ENCODE measurements at regions of chr10 and their contacts with region 1.

Region 1: DNA sequence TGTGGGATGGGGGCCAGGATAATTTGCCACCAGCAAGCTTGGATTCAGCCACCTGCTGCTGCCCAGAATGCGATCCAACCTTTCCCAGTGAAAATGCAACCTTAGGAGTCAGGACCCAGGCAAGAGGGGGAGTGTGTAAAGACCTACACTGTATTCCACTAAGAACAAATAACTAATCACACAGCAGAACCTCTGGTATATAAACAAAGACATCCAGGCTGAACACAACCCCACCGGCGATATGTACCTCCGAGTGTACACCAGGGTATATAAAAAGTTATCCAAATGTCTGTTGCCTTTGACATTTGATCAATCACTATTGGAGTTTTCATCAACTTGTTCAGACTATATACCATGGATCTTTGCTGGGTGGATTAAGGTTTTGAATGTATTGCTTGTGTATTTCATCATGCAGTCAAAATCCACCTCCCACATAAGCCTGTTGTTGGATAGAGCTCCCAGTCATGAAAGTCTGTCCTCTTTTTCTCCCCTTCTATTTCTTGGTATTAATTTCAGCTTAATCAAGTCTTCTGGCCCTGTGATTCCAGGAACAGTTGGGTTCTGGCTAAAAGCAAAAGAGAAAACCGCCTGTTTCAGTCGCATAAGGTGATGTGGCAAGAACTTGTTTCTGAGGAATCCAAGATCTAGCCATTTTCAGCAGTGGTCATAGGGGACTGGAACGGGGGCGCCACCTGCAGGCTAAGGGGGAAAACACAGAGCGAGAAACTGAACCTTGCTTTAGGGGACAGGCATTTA is 290.7 kb downstream of the CCDC3 start:
- DNase-seq: peak; percentile 90
- ATAC-seq: peak; percentile 91
- H3K4me3 Mint-ChIP-seq: no peak overlapping the region
- H3K27ac Mint-ChIP-seq: peak overlapping the region; percentile 84
- H3K4me1 Mint-ChIP-seq: peaks cover 59% of the 10 kb centered on the region
- H3K27me3 Mint-ChIP-seq: no peaks in the 10 kb centered on the region
- CTCF ChIP-seq: peak; percentile 84

Region 2: DNA sequence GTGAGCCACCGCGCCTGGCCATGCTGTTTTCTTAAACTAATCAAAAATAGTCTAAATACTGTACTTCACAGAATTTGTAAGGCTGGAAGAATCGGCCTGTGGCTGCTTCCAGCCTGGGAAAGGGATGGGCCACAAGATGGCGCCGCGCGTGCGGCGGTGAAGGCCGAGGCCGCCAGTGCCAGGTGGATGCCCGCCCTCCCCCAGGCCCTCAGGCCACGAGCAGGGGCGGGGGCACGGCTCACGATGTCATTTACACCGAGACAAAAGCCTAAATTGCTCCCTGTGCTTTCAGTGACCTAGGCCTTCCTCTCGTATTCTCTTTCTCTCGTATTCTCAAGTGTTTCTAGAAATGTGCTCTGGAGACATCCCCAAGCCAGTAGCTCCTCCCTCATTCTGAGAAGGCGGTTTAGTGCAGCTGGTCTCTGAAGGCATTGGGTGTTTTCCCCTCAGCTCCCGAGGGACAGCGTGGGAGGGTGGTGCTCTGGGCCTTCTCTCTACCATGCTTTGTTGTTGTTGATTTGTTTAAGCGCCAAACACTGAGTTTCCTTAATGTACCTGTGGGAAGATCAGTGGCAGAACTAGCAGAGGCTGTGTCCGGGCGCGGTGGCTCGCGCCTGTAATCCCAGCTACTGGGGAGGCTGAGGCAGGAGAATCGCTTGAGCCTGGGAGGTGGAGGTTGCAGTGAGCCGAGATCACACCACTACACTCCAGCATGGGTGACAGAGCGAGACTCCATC is 446.4 kb before region 1 on chr10:
- CTCF ChIA-PET with region 1: interaction called, 9 read pairs
- POLR2A ChIA-PET with region 1: no interaction called
- intact Hi-C with region 1: loop called (anchors 5 kb)
- DNase-seq: peak; percentile 89
- ATAC-seq: peak; percentile 92
- H3K4me3 Mint-ChIP-seq: peak overlapping the region; percentile 30
- H3K27ac Mint-ChIP-seq: peak overlapping the region; percentile 85
- H3K4me1 Mint-ChIP-seq: peaks cover 24% of the 10 kb centered on the region
- H3K27me3 Mint-ChIP-seq: no peaks in the 10 kb centered on the region
- CTCF ChIP-seq: peak; percentile 73

Region 3: DNA sequence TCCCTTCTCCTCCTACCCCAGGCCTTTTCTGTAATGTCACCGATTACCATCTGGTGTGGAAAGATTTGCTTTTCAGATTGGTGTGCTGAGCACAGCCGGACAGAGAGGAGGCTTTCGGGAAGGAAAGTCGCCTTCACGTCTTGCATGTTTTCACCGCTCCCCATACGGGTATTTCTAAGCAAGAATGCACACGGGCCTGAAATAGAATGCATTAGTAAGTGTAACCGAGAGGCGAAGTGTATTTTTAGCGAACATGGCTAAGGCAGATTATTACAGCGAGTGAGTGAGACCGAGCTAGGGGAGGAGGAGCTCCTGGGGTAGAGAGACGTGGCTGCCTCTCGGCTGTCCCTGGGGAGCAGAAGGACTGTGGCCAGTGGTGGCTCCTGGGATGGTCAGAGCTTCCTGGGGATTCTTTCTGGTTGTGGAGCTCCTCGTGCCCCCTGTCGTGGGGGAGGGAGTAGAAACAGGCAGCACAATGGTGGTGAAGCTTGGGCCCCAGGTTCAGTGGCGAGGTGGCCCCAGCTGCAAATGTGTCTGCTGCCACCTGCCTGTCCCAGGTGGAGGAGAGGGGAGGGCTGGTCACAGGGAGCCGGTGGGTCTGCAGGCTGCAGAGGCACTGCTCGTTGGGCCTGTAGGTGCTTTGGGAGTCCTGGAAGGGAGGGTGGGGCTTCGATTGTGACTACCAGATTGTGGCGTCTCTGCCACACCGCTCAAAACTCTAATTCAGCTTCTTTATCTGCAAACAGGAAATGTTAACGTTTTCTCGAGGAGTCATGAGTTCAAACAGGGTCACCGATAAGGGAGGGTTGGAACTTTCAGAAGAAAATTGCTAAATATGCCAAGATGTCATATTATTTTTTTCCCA is 225.6 kb before region 1 on chr10:
- CTCF ChIA-PET with region 1: no interaction called
- POLR2A ChIA-PET with region 1: no interaction called
- intact Hi-C with region 1: no loop called
- DNase-seq: peak; percentile 54
- ATAC-seq: peak; percentile 80
- H3K4me3 Mint-ChIP-seq: no peak overlapping the region
- H3K27ac Mint-ChIP-seq: peak overlapping the region; percentile 56
- H3K4me1 Mint-ChIP-seq: peaks cover 25% of the 10 kb centered on the region
- H3K27me3 Mint-ChIP-seq: no peaks in the 10 kb centered on the region
- CTCF ChIP-seq: no peak

Region 4: GRCh38 chr10:12656518-12657142 is 54.1 kb before region 1 on chr10:
- CTCF ChIA-PET with region 1: interaction called, 15 read pairs
- POLR2A ChIA-PET with region 1: no interaction called
- intact Hi-C with region 1: no loop called
- DNase-seq: no peak
- ATAC-seq: peak; percentile 86
- H3K4me3 Mint-ChIP-seq: no peak overlapping the region
- H3K27ac Mint-ChIP-seq: no peak overlapping the region
- H3K4me1 Mint-ChIP-seq: peaks cover 23% of the 10 kb centered on the region
- H3K27me3 Mint-ChIP-seq: no peaks in the 10 kb centered on the region
- CTCF ChIP-seq: peak; percentile 86

Region 5: GRCh38 chr10:12699258-12699700 is 11.5 kb before region 1 on chr10:
- CTCF ChIA-PET with region 1: interaction called, 15 read pairs
- POLR2A ChIA-PET with region 1: interaction called, 4 read pairs
- intact Hi-C with region 1: no loop called
- DNase-seq: peak; percentile 68
- ATAC-seq: peak; percentile 72
- H3K4me3 Mint-ChIP-seq: no peak overlapping the region
- H3K27ac Mint-ChIP-seq: peak overlapping the region; percentile 92
- H3K4me1 Mint-ChIP-seq: peaks cover 37% of the 10 kb centered on the region
- H3K27me3 Mint-ChIP-seq: no peaks in the 10 kb centered on the region
- CTCF ChIP-seq: no peak

Region 6: GRCh38 chr10:12726971-12727831 is 16.4 kb after region 1 on chr10:
- CTCF ChIA-PET with region 1: interaction called, 26 read pairs
- POLR2A ChIA-PET with region 1: interaction called, 4 read pairs
- intact Hi-C with region 1: no loop called
- DNase-seq: peak; percentile 16
- ATAC-seq: peak; percentile 71
- H3K4me3 Mint-ChIP-seq: no peak overlapping the region
- H3K27ac Mint-ChIP-seq: no peak overlapping the region
- H3K4me1 Mint-ChIP-seq: peaks cover 14% of the 10 kb centered on the region
- H3K27me3 Mint-ChIP-seq: no peaks in the 10 kb centered on the region
- CTCF ChIP-seq: no peak

Region 7: DNA sequence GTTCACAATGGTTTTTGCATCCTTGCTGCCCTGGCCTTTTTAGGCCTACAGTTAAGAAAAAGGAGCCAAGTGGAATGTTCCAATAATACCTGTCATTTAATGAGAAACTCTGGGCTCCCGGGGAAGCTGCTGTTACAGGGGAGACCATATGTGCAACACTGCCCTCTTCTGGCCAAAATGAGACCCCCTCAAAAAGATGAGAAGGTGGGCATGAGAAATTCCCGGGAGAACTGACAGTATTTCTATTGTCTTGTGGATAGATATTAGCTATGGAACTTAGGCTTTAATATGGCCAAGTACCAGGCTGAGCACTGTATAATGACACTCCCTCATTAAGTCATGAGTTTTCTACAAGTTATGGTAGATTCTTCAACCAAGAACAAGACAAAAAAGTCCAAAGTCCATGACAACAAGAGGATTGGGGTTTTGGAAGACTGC is 191.4 kb after region 1 on chr10:
- CTCF ChIA-PET with region 1: interaction called, 18 read pairs
- POLR2A ChIA-PET with region 1: no interaction called
- intact Hi-C with region 1: no loop called
- DNase-seq: peak; percentile 75
- ATAC-seq: peak; percentile 37
- H3K4me3 Mint-ChIP-seq: no peak overlapping the region
- H3K27ac Mint-ChIP-seq: no peak overlapping the region
- H3K4me1 Mint-ChIP-seq: no peaks in the 10 kb centered on the region
- H3K27me3 Mint-ChIP-seq: peaks cover 8% of the 10 kb centered on the region
- CTCF ChIP-seq: peak; percentile 87

Region 8: DNA sequence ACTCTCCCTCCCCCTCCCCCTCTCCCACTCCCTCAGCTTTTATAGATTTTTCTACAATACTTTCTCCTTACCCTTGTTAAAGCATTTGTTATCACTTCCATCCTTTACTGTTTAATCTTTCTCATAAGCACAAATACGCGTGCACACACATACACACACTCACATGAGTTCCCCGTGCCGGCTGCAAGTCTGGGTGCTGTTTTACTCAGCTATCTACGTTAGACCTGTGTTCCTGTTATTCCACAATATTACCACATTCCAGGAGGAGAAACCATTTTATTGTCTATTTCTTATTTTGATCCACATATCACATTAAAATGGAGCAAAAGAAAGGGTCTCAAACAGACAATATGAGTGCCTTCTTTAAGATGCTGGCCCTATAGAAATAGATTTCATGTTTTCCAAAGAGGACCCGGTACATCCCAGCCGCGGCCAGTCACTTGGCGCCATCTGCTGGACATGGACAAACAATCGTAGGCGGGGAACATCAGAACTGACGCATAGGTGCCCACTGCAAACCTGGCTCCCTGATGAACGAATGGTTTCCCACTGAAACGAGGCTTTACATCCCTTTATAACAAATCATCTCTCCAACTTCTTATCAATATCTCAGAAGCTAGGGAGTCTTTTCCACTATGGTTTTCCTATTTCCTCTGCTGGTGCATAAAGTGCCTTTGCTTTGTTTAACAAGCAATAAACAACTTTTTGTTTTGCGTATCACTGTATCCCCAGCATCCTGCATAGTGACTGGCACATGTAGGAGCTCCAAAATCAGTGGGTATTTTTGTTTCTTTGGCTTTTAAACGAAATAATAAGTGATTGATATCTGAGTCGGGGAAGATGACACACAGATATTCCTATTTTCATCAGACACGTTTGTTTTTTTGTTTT is 364.0 kb after region 1 on chr10:
- CTCF ChIA-PET with region 1: interaction called, 4 read pairs
- POLR2A ChIA-PET with region 1: no interaction called
- intact Hi-C with region 1: loop called (anchors 10 kb)
- DNase-seq: peak; percentile 76
- ATAC-seq: peak; percentile 69
- H3K4me3 Mint-ChIP-seq: no peak overlapping the region
- H3K27ac Mint-ChIP-seq: no peak overlapping the region
- H3K4me1 Mint-ChIP-seq: no peaks in the 10 kb centered on the region
- H3K27me3 Mint-ChIP-seq: peaks cover 12% of the 10 kb centered on the region
- CTCF ChIP-seq: peak; percentile 83